CD4-positive, alpha-beta memory T cell (primary cell): ENCODE measurements at regions of chr2 and their contacts with region 1.

Region 1: DNA sequence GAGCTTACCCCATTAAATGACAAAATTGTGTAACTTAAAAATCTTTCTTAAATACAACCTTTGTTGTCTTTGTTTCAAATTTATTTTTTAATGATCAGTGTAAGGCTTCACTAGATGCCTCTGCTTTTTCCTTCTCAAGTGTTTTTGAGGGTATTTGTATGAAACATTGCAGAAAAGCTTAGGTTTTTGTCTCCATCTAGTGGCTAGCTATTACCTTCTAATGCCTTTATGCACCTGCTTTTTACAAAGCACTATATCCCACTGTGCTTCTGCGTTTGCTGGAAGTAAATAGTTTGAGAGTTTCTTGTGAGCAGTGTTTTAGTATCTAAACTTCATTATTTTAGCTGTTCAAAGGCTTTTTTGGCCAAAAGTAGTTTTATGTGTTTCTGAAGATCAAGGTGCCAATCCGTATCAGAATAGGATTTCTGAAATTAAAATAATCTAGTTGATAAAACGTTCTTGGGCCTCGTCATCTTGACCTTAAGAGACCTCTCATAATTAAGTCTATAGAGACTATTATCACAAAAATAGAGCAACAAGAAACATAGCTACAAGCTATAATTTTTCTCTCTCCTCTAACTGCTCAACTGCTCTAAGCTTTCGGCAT is 47.0 kb downstream of the IWS1 start:
- DNase-seq: peak in 4 of 5 donors; percentile 24 to 48 (median 30)
- H3K4me3 ChIP-seq: no peak overlapping the region
- H3K4me3 Mint-ChIP-seq: no peak overlapping the region
- H3K27ac ChIP-seq: no peak overlapping the region
- H3K27ac Mint-ChIP-seq: no peak overlapping the region
- H3K4me1 ChIP-seq: no peaks in the 10 kb centered on the region
- H3K4me1 Mint-ChIP-seq: peaks cover 0 to 1% (median 0%) of the 10 kb centered on the region in 4 donors
- H3K27me3 ChIP-seq: no peaks in the 10 kb centered on the region
- H3K27me3 Mint-ChIP-seq: no peaks in the 10 kb centered on the region

Region 2: DNA sequence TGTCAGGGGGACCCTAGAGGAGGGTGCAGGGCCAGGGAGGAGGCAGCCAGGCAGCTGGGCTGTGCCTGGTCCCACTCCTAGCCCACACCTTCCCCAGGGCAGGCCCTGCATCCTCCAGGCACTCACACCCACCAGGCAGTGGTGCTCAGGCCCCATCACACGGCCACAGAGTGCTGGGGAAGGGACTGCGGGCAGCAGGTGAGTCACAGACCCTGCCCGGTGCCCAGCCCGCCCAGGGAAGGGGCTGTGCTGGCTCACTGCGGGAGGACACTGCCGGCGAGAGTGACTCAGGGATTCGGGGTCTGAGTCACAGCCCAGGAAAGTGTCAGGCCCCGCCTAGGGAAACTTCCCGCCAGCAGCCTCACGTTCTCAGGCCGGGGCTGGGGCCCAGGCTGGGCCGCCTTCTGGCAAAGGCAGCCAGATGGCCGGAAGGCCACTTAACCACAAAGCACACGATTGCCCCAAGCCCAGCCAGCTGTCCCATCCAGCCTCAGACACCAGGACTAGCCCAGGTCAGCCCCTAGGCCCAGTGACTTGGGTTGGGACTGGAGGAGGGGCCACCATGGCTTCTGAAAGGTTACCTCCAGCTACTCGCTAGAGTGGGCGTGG is 414.6 kb before region 1 on chr2:
- CTCF ChIA-PET with region 1: interaction called, 15 read pairs
- POLR2A ChIA-PET with region 1: no interaction called
- intact Hi-C with region 1: loop called (anchors 1 kb)
- DNase-seq: peak in 1 of 5 donors; percentile 62
- H3K4me3 ChIP-seq: no peak overlapping the region
- H3K4me3 Mint-ChIP-seq: no peak overlapping the region
- H3K27ac ChIP-seq: peak overlapping the region; percentile 9
- H3K27ac Mint-ChIP-seq: peak overlapping the region in 2 of 7 donors; percentile 35 to 54
- H3K4me1 ChIP-seq: peaks cover 15% of the 10 kb centered on the region
- H3K4me1 Mint-ChIP-seq: peaks cover 6 to 31% (median 16%) of the 10 kb centered on the region in 4 donors
- H3K27me3 ChIP-seq: no peaks in the 10 kb centered on the region
- H3K27me3 Mint-ChIP-seq: no peaks in the 10 kb centered on the region

Region 3: DNA sequence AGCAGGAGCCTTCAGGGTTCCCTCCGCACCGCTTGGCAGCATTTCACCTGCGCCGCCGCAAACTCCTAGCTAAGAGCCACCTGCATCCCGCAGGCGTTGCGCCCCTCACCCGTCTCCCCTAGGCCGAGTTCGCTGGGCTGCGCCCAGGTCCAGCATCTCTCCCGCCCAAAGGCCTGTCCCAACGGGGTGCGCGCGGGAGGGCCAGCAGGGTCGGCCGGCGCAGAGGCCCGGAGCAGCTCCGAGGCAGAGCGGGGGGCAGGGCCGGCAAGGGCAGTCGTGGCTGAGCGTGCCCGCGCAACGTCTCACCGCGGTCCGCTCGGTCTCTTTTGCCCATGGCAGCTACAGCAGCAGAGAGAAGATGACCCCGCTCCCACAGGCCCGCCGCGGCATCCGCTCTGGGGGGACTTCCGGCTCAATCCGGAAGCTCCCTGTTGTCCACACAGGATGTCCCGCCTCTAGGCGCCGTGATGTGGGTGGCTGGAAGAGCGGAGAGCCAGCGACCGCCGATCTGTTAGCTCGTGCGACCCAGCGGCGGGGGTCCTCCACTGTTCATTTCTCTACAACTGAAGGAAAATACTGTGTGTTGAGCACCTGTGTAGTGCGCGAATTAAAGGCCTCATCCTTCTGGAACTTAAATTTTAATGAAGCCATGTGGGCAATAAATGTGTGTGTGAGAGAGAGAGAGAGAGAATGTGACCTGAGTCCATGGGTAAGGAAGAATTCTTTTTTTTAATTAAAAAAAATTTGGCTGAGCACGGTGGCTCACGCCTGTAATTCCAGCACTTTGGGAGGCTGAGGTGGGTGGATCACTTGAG is 185.4 kb before region 1 on chr2 and contains the start of gene ERCC3:
- CTCF ChIA-PET with region 1: interaction called, 11 read pairs
- POLR2A ChIA-PET with region 1: interaction called, 5 read pairs
- intact Hi-C with region 1: loop called (anchors 1 kb)
- DNase-seq: peak; percentile 70 to 82 (median 72)
- H3K4me3 ChIP-seq: peak within 1 kb of the TSS; percentile 63 to 96
- H3K4me3 Mint-ChIP-seq: peak within 1 kb of the TSS; percentile 96 to 99 (median 98)
- H3K27ac ChIP-seq: peak within 1 kb of the TSS; percentile 86
- H3K27ac Mint-ChIP-seq: peak within 1 kb of the TSS; percentile 86 to 98 (median 95)
- H3K4me1 ChIP-seq: peaks cover 13% of the 10 kb centered on the region
- H3K4me1 Mint-ChIP-seq: peaks cover 23 to 50% (median 28%) of the 10 kb centered on the region in 4 donors
- H3K27me3 ChIP-seq: no peaks in the 10 kb centered on the region
- H3K27me3 Mint-ChIP-seq: no peaks in the 10 kb centered on the region
- total RNA-seq, gene ERCC3: 59.2 to 62.9 TPM

Region 4: DNA sequence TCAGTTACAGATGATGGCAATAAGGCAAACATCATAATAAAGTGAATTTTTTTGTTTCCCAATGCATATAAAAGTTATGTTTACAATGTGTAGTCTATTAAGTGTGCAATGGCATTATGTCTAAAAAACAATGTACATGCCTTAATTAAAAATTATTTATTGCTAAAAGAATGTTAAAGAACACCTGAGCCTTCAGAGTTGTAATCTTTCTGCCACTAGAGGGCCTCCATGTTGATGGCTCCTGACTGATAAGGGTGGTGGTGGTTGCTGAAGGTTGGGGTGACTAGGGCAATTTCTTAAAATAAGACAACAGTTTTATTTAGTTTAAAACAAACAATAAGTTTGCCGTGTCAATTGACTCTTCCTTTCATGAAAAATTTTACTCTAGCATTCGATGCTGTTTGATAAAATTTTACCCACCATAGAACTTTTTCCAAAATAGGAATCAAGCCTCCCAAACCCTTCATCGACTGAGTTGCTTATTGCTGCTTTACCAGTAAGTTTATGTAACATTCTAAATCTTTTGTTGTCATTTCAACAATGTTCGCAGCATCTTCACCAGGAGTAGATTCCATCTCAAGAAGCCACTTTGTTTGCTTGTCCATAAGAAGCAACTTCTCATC is 123.8 kb before region 1 on chr2:
- CTCF ChIA-PET with region 1: interaction called, 15 read pairs
- POLR2A ChIA-PET with region 1: no interaction called
- intact Hi-C with region 1: loop called (anchors 1 kb)
- DNase-seq: peak; percentile 43 to 63 (median 48)
- H3K4me3 ChIP-seq: no peak overlapping the region
- H3K4me3 Mint-ChIP-seq: no peak overlapping the region
- H3K27ac ChIP-seq: no peak overlapping the region
- H3K27ac Mint-ChIP-seq: peak overlapping the region in 1 of 7 donors; percentile 73
- H3K4me1 ChIP-seq: peaks cover 16% of the 10 kb centered on the region
- H3K4me1 Mint-ChIP-seq: peaks cover 39 to 78% (median 59%) of the 10 kb centered on the region in 4 donors
- H3K27me3 ChIP-seq: no peaks in the 10 kb centered on the region
- H3K27me3 Mint-ChIP-seq: no peaks in the 10 kb centered on the region

Region 5: GRCh38 chr2:127469051-127469450 is 10.3 kb before region 1 on chr2:
- CTCF ChIA-PET with region 1: interaction called, 28 read pairs
- POLR2A ChIA-PET with region 1: no interaction called
- intact Hi-C with region 1: no loop called
- DNase-seq: no peak
- H3K4me3 ChIP-seq: no peak overlapping the region
- H3K4me3 Mint-ChIP-seq: no peak overlapping the region
- H3K27ac ChIP-seq: no peak overlapping the region
- H3K27ac Mint-ChIP-seq: peak overlapping the region in 1 of 7 donors; percentile 85
- H3K4me1 ChIP-seq: peaks cover 16% of the 10 kb centered on the region
- H3K4me1 Mint-ChIP-seq: peaks cover 14 to 26% (median 17%) of the 10 kb centered on the region in 4 donors
- H3K27me3 ChIP-seq: no peaks in the 10 kb centered on the region
- H3K27me3 Mint-ChIP-seq: no peaks in the 10 kb centered on the region

Region 6: DNA sequence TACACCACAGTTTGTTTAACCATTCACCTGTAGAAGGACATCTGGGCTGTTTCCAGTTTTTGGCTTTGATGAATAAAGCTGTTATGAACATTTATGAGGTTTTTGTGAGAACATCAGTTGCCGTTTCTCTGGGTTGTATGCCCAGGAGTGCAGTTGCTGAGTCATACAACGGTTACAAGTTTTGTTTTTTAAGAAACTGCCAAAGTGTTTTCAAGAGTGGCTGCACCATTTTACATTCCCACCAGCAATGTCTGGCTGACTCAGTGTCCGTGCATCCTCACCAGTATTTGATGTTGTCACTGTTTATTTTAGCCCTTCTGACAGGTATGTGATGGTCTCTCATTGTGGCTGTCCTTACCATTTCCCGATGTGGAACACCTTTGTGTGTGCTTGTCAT is 118.7 kb after region 1 on chr2:
- CTCF ChIA-PET with region 1: no interaction called
- POLR2A ChIA-PET with region 1: no interaction called
- intact Hi-C with region 1: no loop called
- DNase-seq: no peak
- H3K4me3 ChIP-seq: no peak overlapping the region
- H3K4me3 Mint-ChIP-seq: no peak overlapping the region
- H3K27ac ChIP-seq: no peak overlapping the region
- H3K27ac Mint-ChIP-seq: no peak overlapping the region
- H3K4me1 ChIP-seq: no peaks in the 10 kb centered on the region
- H3K4me1 Mint-ChIP-seq: peaks cover 0 to 10% (median 2%) of the 10 kb centered on the region in 4 donors
- H3K27me3 ChIP-seq: no peaks in the 10 kb centered on the region
- H3K27me3 Mint-ChIP-seq: peaks cover under 1 to 5% of the 10 kb centered on the region in 2 donors